Lower lobe of right lung (tissue), 2 donors: ENCODE measurements at regions of chr5 and their contacts with region 1.

Region 1: GRCh38 chr5:43729846-43730478 is 127.0 kb downstream of the NNT start:
- DNase-seq: no peak
- ATAC-seq: no peak
- H3K4me3 ChIP-seq: no peak overlapping the region
- H3K27ac ChIP-seq: no peak overlapping the region
- H3K4me1 ChIP-seq: no peaks in the 10 kb centered on the region
- H3K27me3 ChIP-seq: no peaks in the 10 kb centered on the region
- CTCF ChIP-seq: peak; percentile 50

Region 2: DNA sequence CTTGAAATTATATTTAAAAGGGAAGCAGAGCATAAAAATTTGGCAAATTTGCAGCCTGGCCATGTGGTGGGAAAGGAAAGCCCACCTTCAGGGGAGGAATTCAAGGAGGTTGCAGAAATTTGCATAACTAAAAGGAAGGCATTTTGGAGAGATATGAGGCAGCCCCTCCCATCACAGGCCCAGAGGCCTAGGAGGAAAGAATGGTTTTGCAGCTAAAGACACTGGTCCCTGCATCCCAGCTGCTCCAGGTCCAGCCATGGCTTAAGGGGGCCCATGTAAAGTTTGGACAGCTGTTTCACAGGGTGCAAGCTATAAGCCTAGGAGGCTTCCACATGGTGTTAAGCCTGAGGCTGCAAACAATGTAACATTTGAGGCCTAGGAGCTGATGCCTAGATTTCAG is 85.5 kb after region 1 on chr5:
- intact Hi-C with region 1: no loop called
- DNase-seq: no peak
- ATAC-seq: no peak
- H3K4me3 ChIP-seq: no peak overlapping the region
- H3K27ac ChIP-seq: no peak overlapping the region
- H3K4me1 ChIP-seq: no peaks in the 10 kb centered on the region
- H3K27me3 ChIP-seq: no peaks in the 10 kb centered on the region
- CTCF ChIP-seq: no peak

Region 3: DNA sequence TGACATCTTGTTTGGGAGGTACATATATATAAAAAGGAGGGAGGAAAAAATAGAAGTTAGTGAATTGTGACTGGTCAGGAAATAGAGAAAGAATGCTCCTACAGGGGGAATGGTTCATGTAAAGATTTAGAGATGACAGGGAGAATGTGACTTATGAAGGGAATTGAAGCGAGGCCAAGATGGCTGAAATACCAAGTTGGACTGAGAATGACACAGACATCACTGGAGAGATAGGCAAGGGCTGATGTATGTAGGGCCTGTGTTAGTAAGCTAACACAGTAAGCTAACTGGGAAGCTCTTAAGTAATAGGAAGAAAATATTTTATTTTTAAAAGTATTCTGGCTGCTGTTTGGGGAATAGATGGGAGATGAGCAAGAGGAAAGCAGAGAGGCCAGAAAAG is 159.3 kb after region 1 on chr5:
- intact Hi-C with region 1: no loop called
- DNase-seq: no peak
- ATAC-seq: no peak
- H3K4me3 ChIP-seq: no peak overlapping the region
- H3K27ac ChIP-seq: no peak overlapping the region
- H3K4me1 ChIP-seq: no peaks in the 10 kb centered on the region
- H3K27me3 ChIP-seq: no peaks in the 10 kb centered on the region
- CTCF ChIP-seq: no peak

Region 4: DNA sequence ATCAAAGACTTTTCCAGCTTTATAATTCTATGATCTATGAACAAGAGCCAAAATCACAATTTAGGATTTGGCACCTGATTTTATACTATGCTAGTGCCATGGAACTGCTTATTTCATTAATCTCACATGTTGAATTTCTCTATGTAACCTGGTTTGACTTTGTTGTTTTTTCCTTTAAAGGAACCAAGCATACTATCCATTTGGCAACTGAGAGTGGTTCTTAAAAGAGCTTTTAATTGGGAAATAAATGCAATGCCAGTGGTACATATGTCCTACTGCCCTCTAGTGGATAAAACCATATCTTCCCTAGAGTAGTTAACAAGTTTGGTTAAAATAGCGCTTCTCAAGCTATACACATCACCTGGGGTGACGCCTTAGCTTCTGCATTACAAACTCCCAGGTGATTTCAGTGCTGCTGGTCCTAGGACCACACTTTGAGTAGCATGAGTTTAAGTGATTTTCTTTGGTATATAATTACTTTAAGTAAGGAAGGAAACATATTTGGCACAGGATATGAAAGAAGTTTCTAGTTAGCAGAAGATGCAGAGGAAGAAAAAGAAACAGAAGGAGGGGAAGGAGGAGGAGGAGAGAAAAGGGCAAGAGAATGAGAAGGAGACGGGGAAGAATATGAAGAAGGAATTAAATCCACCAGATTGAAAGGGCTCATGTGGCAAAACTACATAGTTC is 602.5 kb after region 1 on chr5:
- intact Hi-C with region 1: loop called (anchors 10 kb)
- DNase-seq: no peak
- ATAC-seq: peak; percentile 70 to 72
- H3K4me3 ChIP-seq: no peak overlapping the region
- H3K27ac ChIP-seq: no peak overlapping the region
- H3K4me1 ChIP-seq: no peaks in the 10 kb centered on the region
- H3K27me3 ChIP-seq: no peaks in the 10 kb centered on the region
- CTCF ChIP-seq: peak; percentile 55